Activated naive CD4-positive, alpha-beta T cell treated with anti-CD3 and anti-CD28 coated beads for 36 hours (primary cell): ENCODE measurements at regions of chr19 and their contacts with region 1.

Region 1: GRCh38 chr19:1863726-1864480 is 524 bp upstream of the KLF16 start:
- DNase-seq: peak; percentile 93
- H3K4me3 Mint-ChIP-seq: peak overlapping the region; percentile 75
- H3K27ac Mint-ChIP-seq: peak overlapping the region; percentile 72
- H3K4me1 Mint-ChIP-seq: peaks cover 34% of the 10 kb centered on the region
- H3K27me3 Mint-ChIP-seq: no peaks in the 10 kb centered on the region

Region 2: GRCh38 chr19:1592755-1593500 is 271.0 kb before region 1 on chr19 and contains the start of gene MBD3:
- CTCF ChIA-PET with region 1: no interaction called
- intact Hi-C with region 1: loop called (anchors 5 kb)
- DNase-seq: peak; percentile 84
- H3K4me3 Mint-ChIP-seq: peak within 1 kb of the TSS; percentile 96
- H3K27ac Mint-ChIP-seq: peak within 1 kb of the TSS; percentile 82
- H3K4me1 Mint-ChIP-seq: peaks cover 20% of the 10 kb centered on the region
- H3K27me3 Mint-ChIP-seq: no peaks in the 10 kb centered on the region
- total RNA-seq, gene MBD3: 58.1 to 63.7 TPM

Region 3: GRCh38 chr19:1884719-1885334 is 20.9 kb after region 1 on chr19:
- CTCF ChIA-PET with region 1: interaction called, 5 read pairs
- intact Hi-C with region 1: loop called (anchors 1 kb)
- DNase-seq: no peak
- H3K4me3 Mint-ChIP-seq: peak overlapping the region; percentile 96
- H3K27ac Mint-ChIP-seq: peak overlapping the region; percentile 95
- H3K4me1 Mint-ChIP-seq: peaks cover 27% of the 10 kb centered on the region
- H3K27me3 Mint-ChIP-seq: no peaks in the 10 kb centered on the region

Region 4: DNA sequence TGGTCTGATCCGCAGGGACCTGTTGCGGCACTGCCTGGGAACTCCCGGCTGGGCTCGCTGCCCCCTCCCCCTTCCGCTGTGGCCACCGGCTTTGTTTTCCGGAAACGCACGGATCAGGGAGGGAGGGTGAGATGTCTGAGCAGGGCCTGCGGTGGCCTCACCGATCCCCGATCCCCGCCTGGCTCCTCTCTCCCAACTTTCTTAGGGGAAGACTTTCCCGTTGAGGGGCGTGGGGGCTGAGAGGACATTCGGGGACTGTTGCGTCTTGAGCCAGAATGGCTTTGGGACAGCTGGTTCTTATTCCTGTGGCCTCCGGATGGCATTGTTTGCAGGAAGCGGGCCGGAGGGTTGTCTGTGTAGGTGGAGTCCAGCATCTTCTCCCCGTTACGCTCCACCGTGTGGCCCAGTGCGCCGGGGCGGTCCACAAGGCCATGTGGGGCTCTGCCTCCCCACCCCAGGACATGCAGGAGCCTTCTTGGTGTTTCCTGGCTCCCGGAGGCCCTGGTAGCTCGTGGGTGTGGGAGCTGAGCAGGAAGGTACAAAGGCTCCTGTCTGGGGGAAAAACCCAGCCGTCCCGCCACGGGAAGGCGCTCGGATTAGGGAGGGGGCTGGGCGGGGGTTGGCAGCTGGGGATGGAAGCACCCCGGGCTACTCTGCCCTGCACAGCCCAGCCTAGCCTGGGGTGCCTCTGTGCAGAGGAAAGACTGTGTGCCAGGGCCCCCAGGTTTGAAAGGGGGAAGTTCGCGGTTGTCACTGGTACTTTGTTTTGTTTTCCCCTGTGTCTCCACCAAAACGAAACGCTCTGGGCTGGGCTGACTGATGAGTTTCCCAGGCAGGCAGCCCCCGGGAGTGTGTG is 78.4 kb after region 1 on chr19:
- CTCF ChIA-PET with region 1: no interaction called
- intact Hi-C with region 1: loop called (anchors 1 kb)
- DNase-seq: peak; percentile 89
- H3K4me3 Mint-ChIP-seq: peak overlapping the region; percentile 91
- H3K27ac Mint-ChIP-seq: peak overlapping the region; percentile 92
- H3K4me1 Mint-ChIP-seq: peaks cover 31% of the 10 kb centered on the region
- H3K27me3 Mint-ChIP-seq: no peaks in the 10 kb centered on the region

Region 5: DNA sequence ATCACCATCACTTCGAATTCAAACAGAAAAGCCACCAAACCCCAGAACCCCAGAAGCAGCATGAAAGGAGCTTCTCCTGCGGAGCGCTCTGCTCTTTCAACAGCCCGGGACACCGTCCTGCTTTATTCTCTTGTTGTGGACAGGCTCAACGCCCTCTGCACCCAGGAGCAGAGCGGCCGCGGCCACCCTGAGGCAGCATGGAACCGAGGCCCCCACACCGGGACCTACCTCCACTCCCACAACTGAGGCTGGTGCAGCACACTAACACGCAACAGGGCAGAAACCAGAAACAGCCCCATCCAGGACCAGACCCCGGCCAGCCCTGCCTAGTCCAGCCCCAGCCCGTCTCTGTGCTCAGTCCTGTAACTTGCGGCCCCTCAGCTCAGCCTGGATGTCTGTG is 280.3 kb after region 1 on chr19:
- CTCF ChIA-PET with region 1: no interaction called
- intact Hi-C with region 1: no loop called
- DNase-seq: no peak
- H3K4me3 Mint-ChIP-seq: no peak overlapping the region
- H3K27ac Mint-ChIP-seq: no peak overlapping the region
- H3K4me1 Mint-ChIP-seq: peaks cover 37% of the 10 kb centered on the region
- H3K27me3 Mint-ChIP-seq: no peaks in the 10 kb centered on the region